Aorta (tissue), 5 donors: ENCODE measurements at regions of chr4 and their contacts with region 1.

Region 1: DNA sequence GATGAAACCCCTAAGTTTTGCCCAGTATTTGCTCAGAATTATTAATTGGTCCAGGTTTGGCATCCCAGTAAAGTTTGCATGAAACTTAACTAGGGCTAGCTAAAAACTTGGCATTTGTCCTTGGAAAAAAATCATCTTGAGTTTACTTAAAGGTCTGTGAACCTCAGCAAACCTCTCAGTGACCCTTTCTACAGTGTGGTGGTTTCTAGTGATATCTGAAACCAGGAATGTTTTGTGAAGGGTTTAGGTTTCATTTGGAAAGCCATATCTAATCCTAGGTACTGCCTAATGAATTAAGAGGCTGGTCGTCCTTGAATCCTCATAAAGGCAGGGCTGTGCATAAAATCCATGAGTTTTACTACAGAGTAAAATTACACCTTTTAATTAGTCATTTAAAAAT is 218.5 kb upstream of the ANKRD50 start:
- DNase-seq: no peak
- ATAC-seq: no peak
- H3K4me3 ChIP-seq: no peak overlapping the region
- H3K27ac ChIP-seq: no peak overlapping the region
- H3K4me1 ChIP-seq: no peaks in the 10 kb centered on the region
- H3K27me3 ChIP-seq: no peaks in the 10 kb centered on the region

Region 2: DNA sequence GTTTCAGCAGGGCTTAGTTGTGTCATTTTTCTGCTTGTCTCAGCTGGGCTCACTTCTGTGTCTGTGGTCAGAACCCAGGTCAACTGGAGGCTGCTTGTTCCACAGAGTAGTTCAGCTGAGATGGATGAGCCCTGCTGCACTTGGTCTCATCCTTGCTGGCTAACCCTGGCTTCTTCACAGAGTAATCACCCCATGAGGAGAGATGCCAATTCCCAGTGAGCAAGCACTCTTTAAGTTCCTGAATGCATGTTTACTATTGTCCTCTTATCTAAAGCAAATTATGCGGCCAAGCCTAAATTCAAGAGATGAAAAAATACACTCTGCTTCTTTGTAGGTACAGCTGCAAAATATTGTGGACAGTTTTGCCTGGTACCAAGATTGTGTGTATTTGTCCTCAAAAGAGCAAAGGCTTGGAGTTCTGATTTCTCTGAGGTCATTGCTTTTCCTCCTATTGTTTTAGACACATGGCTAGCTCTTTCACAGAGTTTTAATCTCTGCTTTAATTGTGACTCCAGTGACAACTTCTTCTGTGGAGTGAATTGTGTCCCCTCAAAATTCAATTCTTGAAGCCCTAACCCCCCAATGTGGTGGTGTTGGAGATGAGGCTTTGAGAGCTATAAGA is 18.0 kb after region 1 on chr4:
- intact Hi-C with region 1: loop called in 1 of 2 experiments (anchors 1 kb)
- DNase-seq: no peak
- ATAC-seq: no peak
- H3K4me3 ChIP-seq: no peak overlapping the region
- H3K27ac ChIP-seq: no peak overlapping the region
- H3K4me1 ChIP-seq: no peaks in the 10 kb centered on the region
- H3K27me3 ChIP-seq: no peaks in the 10 kb centered on the region

Region 3: DNA sequence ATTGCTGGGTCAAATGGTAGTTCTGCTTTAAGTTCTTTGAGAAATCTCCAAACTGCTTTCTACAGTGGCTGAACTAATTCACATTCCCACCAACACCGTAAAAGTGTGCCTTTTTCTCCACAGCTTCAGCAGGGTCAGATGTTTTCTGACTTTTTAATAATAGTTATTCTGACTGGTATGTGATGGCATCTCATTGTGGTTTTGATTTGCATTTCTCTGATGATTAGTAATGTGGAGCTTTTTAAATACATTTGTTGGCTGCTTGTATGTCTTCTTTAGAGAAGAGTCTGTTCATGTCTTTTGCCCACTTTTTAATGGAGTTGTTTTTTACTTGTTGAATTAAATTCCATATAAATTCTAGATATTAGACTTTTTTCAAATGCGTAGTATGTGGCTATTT is 39.0 kb after region 1 on chr4:
- intact Hi-C with region 1: no loop called
- DNase-seq: no peak
- ATAC-seq: no peak
- H3K4me3 ChIP-seq: no peak overlapping the region
- H3K27ac ChIP-seq: no peak overlapping the region
- H3K4me1 ChIP-seq: no peaks in the 10 kb centered on the region
- H3K27me3 ChIP-seq: no peaks in the 10 kb centered on the region